Activated CD4-positive, alpha-beta T cell treated with anti-CD3 and anti-CD28 coated beads for 36 hours (primary cell): ENCODE measurements at regions of chr9 and their contacts with region 1.

Region 1: DNA sequence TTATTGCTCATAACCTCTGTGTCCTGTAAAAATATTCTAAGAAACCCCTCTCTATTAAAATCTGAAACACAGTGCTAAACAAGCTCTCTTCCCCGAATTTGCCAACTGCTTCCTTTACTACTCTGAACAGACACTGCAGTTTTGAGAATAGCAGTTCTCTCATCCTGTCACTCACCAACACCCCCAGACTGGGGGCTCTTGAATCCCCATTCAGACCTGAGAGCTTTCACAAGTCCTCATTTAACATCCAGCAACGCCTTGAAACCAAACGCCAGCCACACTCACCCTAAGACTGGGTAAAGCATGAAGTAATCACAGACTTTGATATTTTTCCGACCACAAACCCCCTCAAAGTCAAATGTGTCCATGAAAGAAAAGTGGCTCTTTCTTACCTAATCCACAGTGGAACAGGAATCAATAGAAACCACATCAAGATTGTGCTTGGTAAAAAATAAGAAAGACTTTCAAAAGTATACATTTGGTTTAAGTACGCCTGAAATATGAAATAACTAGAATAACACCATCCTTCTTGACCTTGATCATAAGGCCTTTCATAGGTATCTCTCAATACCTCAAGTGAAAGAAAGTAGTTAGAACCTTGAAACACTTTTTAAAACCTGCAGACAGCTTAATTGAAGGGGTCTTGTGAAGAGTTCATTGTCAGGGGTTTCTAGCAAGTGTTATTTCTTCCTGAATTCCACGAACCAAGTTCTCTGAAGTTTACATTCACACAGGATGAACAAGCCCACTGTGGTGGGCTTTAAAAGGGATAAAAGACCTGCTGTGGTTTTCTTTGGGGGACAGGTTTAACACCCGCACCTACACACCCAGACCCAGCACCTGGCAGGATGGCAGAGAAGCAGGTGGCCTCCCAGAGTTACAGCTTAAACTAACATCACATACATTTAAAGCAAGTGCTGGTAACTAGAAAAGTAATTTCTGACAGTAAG is 412.6 kb downstream of the MLLT3 start:
- DNase-seq: peak; percentile 77
- ATAC-seq: peak; percentile 79
- H3K4me3 Mint-ChIP-seq: peak overlapping the region; percentile 31
- H3K27ac Mint-ChIP-seq: peak overlapping the region; percentile 84
- H3K4me1 Mint-ChIP-seq: peaks cover 25% of the 10 kb centered on the region
- H3K27me3 Mint-ChIP-seq: no peaks in the 10 kb centered on the region

Region 2: DNA sequence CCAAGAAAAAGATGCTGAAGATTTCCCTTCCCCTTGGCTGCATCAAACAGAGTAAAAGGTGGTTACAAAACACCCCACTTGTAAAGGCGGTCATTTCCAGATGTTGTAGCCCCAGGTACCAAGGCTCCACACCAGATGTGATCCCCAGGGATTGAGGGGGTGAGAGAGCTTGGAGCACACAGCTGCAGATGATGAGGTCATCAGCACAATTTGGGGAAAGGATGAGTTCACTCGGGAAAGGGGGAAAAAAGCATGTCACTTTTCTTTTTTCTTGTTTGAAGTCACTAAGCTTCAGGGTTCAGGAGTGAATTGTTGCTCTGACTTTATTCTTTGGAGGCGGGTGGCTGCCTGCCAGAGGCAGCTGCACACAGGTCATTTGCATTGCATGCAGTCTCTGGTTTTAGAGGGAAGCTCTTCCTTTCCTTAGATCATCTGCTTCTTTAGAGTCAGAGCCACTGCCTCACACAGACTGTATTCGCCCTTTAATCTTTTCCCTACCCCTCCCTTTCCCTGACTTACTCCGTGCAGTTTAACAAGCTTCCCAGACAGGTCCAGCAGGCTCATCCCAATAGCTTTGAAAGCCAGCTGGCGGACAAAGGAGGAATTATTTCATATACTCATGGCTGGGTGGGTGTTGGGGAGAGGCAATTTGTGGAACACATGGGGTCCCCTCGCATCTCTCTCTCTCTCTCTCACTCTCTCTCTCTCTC is 11.5 kb before region 1 on chr9:
- CTCF ChIA-PET with region 1: no interaction called
- POLR2A ChIA-PET with region 1: no interaction called
- intact Hi-C with region 1: no loop called
- DNase-seq: no peak
- ATAC-seq: no peak
- H3K4me3 Mint-ChIP-seq: no peak overlapping the region
- H3K27ac Mint-ChIP-seq: no peak overlapping the region
- H3K4me1 Mint-ChIP-seq: peaks cover 7% of the 10 kb centered on the region
- H3K27me3 Mint-ChIP-seq: peaks cover 4% of the 10 kb centered on the region

Region 3: DNA sequence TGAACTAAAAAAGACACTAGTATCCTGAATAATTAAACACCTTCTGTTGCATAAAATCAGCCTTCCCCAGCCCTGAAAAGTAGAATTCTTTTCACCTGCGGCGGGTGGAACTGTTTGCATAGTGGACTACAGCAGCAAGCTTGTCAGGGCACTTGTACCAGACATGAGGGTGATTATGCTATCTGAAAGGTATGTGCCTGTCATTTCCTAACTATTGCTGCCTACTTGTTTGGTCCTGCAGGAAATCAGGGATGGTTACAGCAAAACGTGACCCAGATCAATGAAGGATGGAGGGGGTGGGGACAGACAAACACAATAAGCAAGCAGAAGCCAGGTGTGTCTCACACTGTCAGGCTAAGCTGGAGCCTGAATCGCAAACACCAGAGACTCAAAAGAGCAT is 27.0 kb after region 1 on chr9:
- CTCF ChIA-PET with region 1: no interaction called
- POLR2A ChIA-PET with region 1: interaction called, 11 read pairs
- intact Hi-C with region 1: no loop called
- DNase-seq: no peak
- ATAC-seq: no peak
- H3K4me3 Mint-ChIP-seq: no peak overlapping the region
- H3K27ac Mint-ChIP-seq: no peak overlapping the region
- H3K4me1 Mint-ChIP-seq: peaks cover 13% of the 10 kb centered on the region
- H3K27me3 Mint-ChIP-seq: peaks cover 9% of the 10 kb centered on the region

Region 4: DNA sequence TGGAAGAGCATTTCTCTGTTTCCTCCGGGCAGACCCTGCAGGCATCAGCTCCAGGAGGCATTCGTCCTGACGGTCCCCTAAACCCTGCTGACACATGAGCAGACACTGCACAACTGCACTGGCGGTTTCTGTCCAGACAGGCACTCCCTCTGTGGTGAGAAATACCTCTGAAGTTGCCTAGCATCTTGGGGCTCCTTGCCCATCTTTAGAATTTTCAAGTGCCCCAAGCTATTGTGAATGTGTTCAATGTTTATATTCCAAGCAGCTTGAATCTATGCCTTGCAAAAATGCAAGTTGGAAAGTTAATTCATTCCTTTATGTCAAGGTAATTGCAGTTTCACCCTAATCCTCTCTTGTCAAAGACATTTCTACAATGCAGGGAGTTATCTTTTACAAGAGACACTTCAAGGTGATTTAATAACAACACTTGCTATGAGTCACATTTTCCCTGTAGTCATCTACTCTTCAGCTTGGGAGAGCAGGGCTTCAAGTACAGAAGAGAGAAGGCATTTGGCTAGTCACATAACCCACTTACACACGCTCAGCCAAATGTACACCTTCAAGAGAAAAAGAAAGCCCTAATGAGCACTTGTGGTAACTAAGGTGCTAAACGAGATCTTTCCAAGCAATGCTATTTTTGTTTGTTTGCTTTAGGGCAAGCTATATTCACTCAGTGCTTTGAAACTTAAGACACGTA is 110.1 kb after region 1 on chr9:
- CTCF ChIA-PET with region 1: no interaction called
- POLR2A ChIA-PET with region 1: no interaction called
- intact Hi-C with region 1: loop called in 1 of 2 experiments (anchors 2 kb)
- DNase-seq: peak; percentile 52
- ATAC-seq: peak; percentile 74
- H3K4me3 Mint-ChIP-seq: no peak overlapping the region
- H3K27ac Mint-ChIP-seq: peak overlapping the region; percentile 29
- H3K4me1 Mint-ChIP-seq: peaks cover 90% of the 10 kb centered on the region
- H3K27me3 Mint-ChIP-seq: no peaks in the 10 kb centered on the region

Region 5: DNA sequence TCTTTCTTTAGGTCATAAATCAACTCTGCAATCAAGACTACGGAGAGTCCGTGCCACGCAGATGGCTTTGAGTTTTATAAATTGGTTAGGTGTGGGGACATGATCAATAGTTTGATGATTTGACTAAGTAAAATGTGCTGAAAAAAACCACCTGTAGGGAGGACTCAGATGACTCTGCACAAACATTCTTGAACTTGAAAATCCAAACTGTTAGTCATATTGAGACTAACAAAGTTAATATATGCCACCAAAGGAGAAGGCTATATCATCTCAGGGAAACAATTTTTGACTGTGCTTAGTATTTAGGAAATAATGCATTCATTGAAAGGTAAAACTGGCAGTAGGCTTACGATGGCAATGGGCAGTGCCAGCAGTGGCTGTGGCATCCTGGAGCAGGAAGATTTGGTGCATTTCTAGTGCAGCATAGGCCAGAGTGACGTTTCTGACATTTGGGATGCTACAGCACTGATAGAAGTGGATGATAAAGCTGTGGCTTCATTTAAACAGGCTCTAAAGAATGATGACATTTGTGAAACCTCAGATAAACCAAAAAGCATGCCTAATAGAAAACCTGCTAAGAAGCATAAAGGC is 121.5 kb after region 1 on chr9:
- CTCF ChIA-PET with region 1: no interaction called
- POLR2A ChIA-PET with region 1: no interaction called
- intact Hi-C with region 1: loop called in 1 of 2 experiments (anchors 10 kb)
- DNase-seq: no peak
- ATAC-seq: peak; percentile 93
- H3K4me3 Mint-ChIP-seq: no peak overlapping the region
- H3K27ac Mint-ChIP-seq: no peak overlapping the region
- H3K4me1 Mint-ChIP-seq: peaks cover 13% of the 10 kb centered on the region
- H3K27me3 Mint-ChIP-seq: no peaks in the 10 kb centered on the region

Region 6: DNA sequence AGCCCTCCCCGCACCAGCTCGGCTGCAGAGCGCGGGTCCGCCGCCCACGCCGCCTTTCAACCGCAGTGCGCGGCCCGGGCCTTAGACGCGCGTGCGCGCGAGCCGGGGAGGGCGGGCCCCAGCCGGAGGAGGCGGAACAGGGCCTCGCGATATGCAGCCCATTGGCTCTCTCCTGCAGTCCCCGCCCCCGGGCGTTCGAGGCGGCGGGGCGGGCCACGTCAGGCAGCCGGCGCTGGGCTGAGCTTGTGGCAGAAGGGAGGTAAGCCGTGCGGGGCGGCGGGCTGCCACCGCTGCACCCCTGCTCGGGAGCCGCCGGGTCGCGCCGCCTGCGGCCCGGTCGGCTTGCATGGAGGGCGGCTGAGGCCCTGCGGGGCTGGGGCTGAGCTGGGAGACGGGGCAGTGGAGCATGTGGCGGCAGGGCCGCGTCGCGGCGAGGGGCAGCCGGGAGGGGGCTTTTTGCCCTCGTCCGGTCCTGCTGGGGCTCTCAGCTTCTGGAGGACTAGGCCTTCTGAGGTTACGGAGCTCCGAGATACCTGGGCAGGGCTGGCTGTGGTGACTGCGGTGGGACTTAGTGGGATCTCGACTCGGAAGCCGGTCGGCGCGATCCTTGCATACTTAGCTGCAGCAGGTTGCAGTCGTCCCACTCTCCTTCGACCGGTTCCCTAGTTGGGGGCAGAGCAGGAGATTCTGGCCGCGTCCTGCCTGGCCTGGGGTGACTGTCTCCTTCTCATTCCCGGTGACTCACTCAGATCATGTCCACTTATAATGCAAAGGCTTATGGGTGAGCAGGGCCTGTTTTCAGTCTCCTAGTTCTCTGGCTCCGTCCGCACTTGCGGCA is 474.6 kb after region 1 on chr9 and contains the start of gene FOCAD:
- CTCF ChIA-PET with region 1: no interaction called
- POLR2A ChIA-PET with region 1: no interaction called
- intact Hi-C with region 1: loop called in 1 of 2 experiments (anchors 2 kb)
- DNase-seq: peak; percentile 97
- ATAC-seq: peak; percentile 98
- H3K4me3 Mint-ChIP-seq: peak within 1 kb of the TSS; percentile 86
- H3K27ac Mint-ChIP-seq: peak within 1 kb of the TSS; percentile 75
- H3K4me1 Mint-ChIP-seq: peaks cover 27% of the 10 kb centered on the region
- H3K27me3 Mint-ChIP-seq: no peaks in the 10 kb centered on the region
- total RNA-seq, gene FOCAD: 32.5 to 34.3 TPM

Region 7: GRCh38 chr9:21031091-21031807 is 821.6 kb after region 1 on chr9 and contains the start of gene HACD4:
- CTCF ChIA-PET with region 1: no interaction called
- POLR2A ChIA-PET with region 1: no interaction called
- intact Hi-C with region 1: loop called in 1 of 2 experiments (anchors 5 kb)
- DNase-seq: peak; percentile 79
- ATAC-seq: peak; percentile 79
- H3K4me3 Mint-ChIP-seq: peak within 1 kb of the TSS; percentile 53
- H3K27ac Mint-ChIP-seq: peak within 1 kb of the TSS; percentile 71
- H3K4me1 Mint-ChIP-seq: peaks cover 26% of the 10 kb centered on the region
- H3K27me3 Mint-ChIP-seq: no peaks in the 10 kb centered on the region
- total RNA-seq, gene HACD4: 2.7 to 3.0 TPM